ENCODE measurements at regions of chr20 and their contacts with region 1.

Region 1: DNA sequence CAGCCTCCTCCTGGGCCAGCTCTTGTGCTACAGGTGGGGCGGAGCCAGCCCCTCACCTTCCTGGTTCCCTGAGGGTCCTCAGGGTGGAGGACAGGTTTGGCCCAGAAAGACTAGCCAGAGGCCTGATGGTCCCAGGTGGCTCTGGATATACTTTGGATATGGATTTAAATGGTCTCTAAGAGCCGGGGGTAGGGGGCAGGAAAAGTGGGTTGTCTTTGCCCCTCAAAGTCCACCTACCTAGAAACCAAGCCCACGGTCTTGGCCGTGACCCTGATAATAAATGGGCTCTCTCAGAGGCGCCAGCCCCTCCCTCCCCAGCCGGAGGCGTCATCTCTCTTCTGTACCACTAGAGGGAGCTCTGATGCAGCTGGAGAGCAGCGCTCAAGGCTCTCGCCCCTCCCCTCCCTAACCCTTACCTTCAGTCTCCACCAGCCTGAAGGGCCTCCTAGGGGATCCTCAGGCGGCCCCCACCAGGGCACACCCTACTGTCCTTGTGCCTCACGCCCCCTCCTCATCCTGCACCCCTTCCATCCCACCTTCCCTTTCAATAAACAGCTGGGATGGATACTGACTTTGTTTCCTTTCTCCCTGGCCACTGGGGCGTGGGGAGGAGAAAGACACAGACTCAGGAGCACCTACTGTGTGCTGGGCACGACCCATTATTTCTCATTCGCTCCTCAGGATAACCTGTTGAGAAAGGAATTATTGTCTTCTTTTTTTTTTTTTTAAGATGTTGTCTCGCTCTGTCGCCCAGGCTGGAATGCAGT is 7.6 kb downstream of the NRSN2 start:
- DNase-seq: peak; percentile 83 to 95
- ATAC-seq: peak; percentile 85 to 95
- H3K4me3 ChIP-seq: no peak overlapping the region
- H3K27ac ChIP-seq: peak overlapping the region; percentile 71 to 81
- H3K4me1 ChIP-seq: peaks cover 13% of the 10 kb centered on the region; the same call in 2 of the 3 replicates
- CTCF ChIP-seq: peak; percentile 99
- EP300 ChIP-seq: no peak
- POLR2A ChIP-seq: no peak
- RAD21 ChIP-seq: peak; percentile 99 to 100

Region 2: DNA sequence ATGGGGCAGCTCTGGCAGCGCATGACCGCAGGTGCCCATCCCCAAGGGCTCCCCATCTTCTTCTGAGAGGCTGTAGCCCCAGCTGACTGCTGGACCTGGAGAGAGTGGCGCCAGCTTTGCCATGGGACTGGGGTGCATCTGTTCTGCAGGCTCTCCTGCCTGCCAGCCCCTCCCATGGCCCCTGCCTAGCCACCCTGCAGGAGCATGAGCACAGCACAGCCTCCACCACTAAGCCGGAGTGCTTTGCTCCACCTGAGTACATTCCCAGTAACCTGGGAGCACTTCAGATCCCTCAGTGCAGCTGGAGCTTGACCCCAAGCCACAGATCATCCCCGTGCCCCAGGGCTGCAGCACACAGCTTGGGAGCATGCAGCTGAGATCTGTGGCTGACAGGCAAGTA is 251.0 kb before region 1 on chr20:
- CTCF ChIA-PET with region 1: no interaction called
- POLR2A ChIA-PET with region 1: no interaction called
- DNase-seq: no peak
- ATAC-seq: no peak
- H3K4me3 ChIP-seq: no peak overlapping the region
- H3K27ac ChIP-seq: no peak overlapping the region
- H3K4me1 ChIP-seq: no peaks in the 10 kb centered on the region
- CTCF ChIP-seq: no peak
- EP300 ChIP-seq: no peak
- POLR2A ChIP-seq: no peak
- RAD21 ChIP-seq: no peak

Region 3: DNA sequence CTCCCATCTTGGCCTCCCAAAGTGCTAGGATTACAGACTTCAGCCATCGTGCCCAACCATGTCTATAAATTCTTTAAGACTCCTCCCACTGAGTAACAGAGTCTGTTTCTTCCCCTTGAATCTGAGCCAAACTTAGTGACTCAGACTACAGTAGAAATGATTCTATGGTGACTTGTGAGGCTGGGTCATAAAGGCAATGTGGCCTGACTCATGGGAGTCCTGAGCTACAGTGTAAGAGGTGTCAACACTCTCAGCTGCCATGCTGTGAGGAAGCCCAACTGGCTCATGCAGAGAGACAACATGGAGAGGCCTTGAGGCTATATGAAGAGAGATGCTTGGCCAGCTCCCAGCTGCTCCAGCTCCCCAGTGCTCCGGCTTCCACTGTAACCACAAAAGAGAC is 12.8 kb before region 1 on chr20:
- CTCF ChIA-PET with region 1: interaction called, 30 read pairs
- POLR2A ChIA-PET with region 1: no interaction called
- DNase-seq: peak in 1 of 2 experiments; percentile 95
- ATAC-seq: peak; percentile 77
- H3K4me3 ChIP-seq: no peak overlapping the region
- H3K27ac ChIP-seq: no peak overlapping the region
- H3K4me1 ChIP-seq: peaks cover 6% of the 10 kb centered on the region
- CTCF ChIP-seq: no peak
- EP300 ChIP-seq: no peak
- POLR2A ChIP-seq: no peak
- RAD21 ChIP-seq: no peak

Region 4: GRCh38 chr20:391041-391711 is 36.7 kb after region 1 on chr20:
- CTCF ChIA-PET with region 1: interaction called, 119 read pairs
- POLR2A ChIA-PET with region 1: interaction called, 6 read pairs
- DNase-seq: no peak
- ATAC-seq: peak; percentile 44 to 49
- H3K4me3 ChIP-seq: no peak overlapping the region
- H3K27ac ChIP-seq: no peak overlapping the region
- H3K4me1 ChIP-seq: peaks cover 41% of the 10 kb centered on the region; the same call in 2 of the 3 replicates
- CTCF ChIP-seq: no peak
- EP300 ChIP-seq: no peak
- POLR2A ChIP-seq: no peak
- RAD21 ChIP-seq: no peak

Region 5: GRCh38 chr20:407133-407952 is 52.9 kb after region 1 on chr20:
- CTCF ChIA-PET with region 1: interaction called, 19 read pairs
- POLR2A ChIA-PET with region 1: interaction called, 5 read pairs
- DNase-seq: peak; percentile 91
- ATAC-seq: peak; percentile 87
- H3K4me3 ChIP-seq: peak overlapping the region; percentile 48
- H3K27ac ChIP-seq: peak overlapping the region; percentile 93 to 99
- H3K4me1 ChIP-seq: peaks cover 31% of the 10 kb centered on the region
- CTCF ChIP-seq: peak; percentile 47
- EP300 ChIP-seq: no peak
- POLR2A ChIP-seq: peak; percentile 74
- RAD21 ChIP-seq: peak; percentile 26 to 54; a peak in 4 of 5 replicates

Region 6: GRCh38 chr20:431012-431904 is 76.8 kb after region 1 on chr20:
- CTCF ChIA-PET with region 1: interaction called, 1,229 read pairs
- POLR2A ChIA-PET with region 1: interaction called, 4 read pairs
- DNase-seq: peak; percentile 94 to 95
- ATAC-seq: peak; percentile 70 to 93
- H3K4me3 ChIP-seq: no peak overlapping the region
- H3K27ac ChIP-seq: peak overlapping the region; percentile 27 to 73; a peak in 5 of 6 replicates
- H3K4me1 ChIP-seq: peaks cover 16% of the 10 kb centered on the region
- CTCF ChIP-seq: peak; percentile 99
- EP300 ChIP-seq: no peak
- POLR2A ChIP-seq: no peak
- RAD21 ChIP-seq: peak; percentile 95 to 98

Region 7: DNA sequence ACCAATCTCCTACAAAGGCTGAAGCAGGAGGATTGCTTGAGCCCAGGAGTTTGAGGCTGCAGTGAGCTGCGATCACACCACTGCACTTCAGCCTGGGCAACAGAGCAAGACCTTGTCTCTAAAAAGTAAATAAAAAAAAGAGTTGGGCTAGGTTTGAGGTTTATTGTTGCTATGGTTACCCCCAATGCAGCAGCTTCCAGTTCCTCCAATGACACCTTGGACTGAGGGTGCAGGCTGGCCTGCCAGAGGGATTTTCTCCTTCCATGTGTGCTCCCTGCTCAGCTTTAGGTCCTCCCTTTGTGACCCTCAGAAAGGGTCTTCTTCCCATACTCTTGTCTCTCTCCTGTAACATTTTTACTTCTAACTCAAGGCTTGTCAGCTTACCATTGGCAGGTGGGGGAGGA is 118.4 kb after region 1 on chr20:
- CTCF ChIA-PET with region 1: interaction called, 71 read pairs
- POLR2A ChIA-PET with region 1: no interaction called
- DNase-seq: no peak
- ATAC-seq: peak; percentile 26 to 54; a peak in 3 of 6 replicates
- H3K4me3 ChIP-seq: no peak overlapping the region
- H3K27ac ChIP-seq: no peak overlapping the region
- H3K4me1 ChIP-seq: no peaks in the 10 kb centered on the region
- CTCF ChIP-seq: no peak
- EP300 ChIP-seq: no peak
- POLR2A ChIP-seq: no peak
- RAD21 ChIP-seq: no peak

Region 8: GRCh38 chr20:645318-646106 is 291.0 kb after region 1 on chr20:
- CTCF ChIA-PET with region 1: interaction called, 14 read pairs
- POLR2A ChIA-PET with region 1: no interaction called
- DNase-seq: peak; percentile 87 to 91
- ATAC-seq: peak; percentile 57 to 79
- H3K4me3 ChIP-seq: no peak overlapping the region
- H3K27ac ChIP-seq: peak overlapping the region in 1 of 2 experiments; percentile 50; a peak in 2 of 6 replicates
- H3K4me1 ChIP-seq: peaks cover 25% of the 10 kb centered on the region
- CTCF ChIP-seq: peak; percentile 97
- EP300 ChIP-seq: no peak
- POLR2A ChIP-seq: no peak
- RAD21 ChIP-seq: peak; percentile 73 to 78

Region 9: GRCh38 chr20:688809-689212 is 334.3 kb after region 1 on chr20:
- CTCF ChIA-PET with region 1: no interaction called
- POLR2A ChIA-PET with region 1: no interaction called
- DNase-seq: no peak
- ATAC-seq: peak; percentile 42 to 76; a peak in 3 of 6 replicates
- H3K4me3 ChIP-seq: no peak overlapping the region
- H3K27ac ChIP-seq: no peak overlapping the region
- H3K4me1 ChIP-seq: no peaks in the 10 kb centered on the region
- CTCF ChIP-seq: no peak
- EP300 ChIP-seq: no peak
- POLR2A ChIP-seq: no peak
- RAD21 ChIP-seq: no peak

Measured in A549 (cell line).